ENCODE measurements at regions of chr19 and their contacts with region 1.

Region 1: GRCh38 chr19:47296036-47296435 is 13.6 kb upstream of the C5AR1 start:
- DNase-seq: peak; percentile 61
- ATAC-seq: peak; percentile 92

Region 2: DNA sequence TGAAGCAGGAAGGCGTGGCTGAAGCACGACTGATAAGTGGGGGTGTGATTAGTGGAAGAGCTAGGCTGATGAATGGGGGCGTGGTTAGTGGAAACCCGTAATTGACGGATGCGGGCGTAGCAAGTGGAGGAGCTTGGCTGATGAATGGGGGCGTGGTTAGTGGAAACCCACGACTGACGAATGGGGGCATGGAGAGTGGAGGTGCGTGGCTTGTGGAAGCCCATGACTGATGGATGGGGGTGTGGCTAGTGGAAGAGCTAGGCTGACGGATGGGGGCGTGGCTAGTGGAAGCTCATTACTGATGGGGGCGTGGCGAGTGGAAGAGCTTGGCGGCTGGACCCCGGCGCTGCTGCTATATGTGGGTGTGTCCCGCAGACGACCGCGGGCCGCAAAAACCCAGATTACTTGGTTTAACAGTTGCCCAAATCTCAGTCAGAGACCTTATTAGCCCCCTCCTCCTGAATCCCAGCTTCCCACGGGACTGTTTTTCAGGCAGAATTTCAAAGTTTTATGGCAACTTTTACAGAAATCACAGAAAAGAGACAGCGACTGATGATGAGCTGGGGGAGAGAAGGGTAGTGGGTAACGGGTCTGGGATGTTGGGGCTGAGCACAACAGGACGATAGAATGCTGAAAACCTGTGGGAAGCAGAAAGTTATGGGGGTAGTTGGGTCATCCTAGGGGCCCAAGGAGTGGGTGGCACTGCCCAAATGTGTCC is 132.3 kb after region 1 on chr19:
- intact Hi-C with region 1: loop called (anchors 10 kb)
- DNase-seq: peak; percentile 88
- ATAC-seq: peak; percentile 86

Region 3: GRCh38 chr19:47447470-47448359 is 151.7 kb after region 1 on chr19:
- intact Hi-C with region 1: no loop called
- DNase-seq: no peak
- ATAC-seq: peak; percentile 41